ENCODE measurements at regions of chr2 and their contacts with region 1.

Region 1: GRCh38 chr2:181058378-181059269 is 78.2 kb downstream of the UBE2E3 start:
- DNase-seq: peak; percentile 62
- H3K4me3 ChIP-seq: no peak overlapping the region
- H3K27ac ChIP-seq: no peak overlapping the region
- H3K4me1 ChIP-seq: no peaks in the 10 kb centered on the region
- CTCF ChIP-seq: peak; percentile 100

Region 2: GRCh38 chr2:180125245-180125962 is 933.2 kb before region 1 on chr2:
- CTCF ChIA-PET with region 1: no interaction called
- POLR2A ChIA-PET with region 1: no interaction called
- intact Hi-C with region 1: loop called (anchors 1 kb)
- DNase-seq: peak; percentile 63
- H3K4me3 ChIP-seq: no peak overlapping the region
- H3K27ac ChIP-seq: no peak overlapping the region
- H3K4me1 ChIP-seq: no peaks in the 10 kb centered on the region
- CTCF ChIP-seq: peak; percentile 75

Region 3: DNA sequence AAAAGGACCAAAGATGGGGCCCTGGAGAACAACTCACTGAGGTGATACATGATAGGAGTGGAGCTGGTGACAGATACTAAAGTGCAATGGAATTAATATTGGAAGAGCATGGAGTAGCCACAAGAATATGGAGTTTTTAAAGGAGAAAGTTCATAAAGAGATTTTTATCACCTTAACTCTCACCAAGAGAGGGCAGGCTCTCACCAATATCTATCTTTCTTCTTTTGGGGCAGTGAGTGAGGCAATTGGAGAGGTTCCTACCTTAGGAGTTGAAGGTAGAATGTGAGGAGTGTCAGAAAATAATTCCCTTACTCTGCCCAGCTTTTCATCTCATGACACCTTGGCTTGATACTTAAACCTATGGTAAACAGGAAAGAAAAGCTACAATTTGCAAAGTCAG is 817.9 kb before region 1 on chr2:
- CTCF ChIA-PET with region 1: no interaction called
- POLR2A ChIA-PET with region 1: no interaction called
- intact Hi-C with region 1: loop called (anchors 10 kb)
- DNase-seq: peak; percentile 5
- H3K4me3 ChIP-seq: no peak overlapping the region
- H3K27ac ChIP-seq: no peak overlapping the region
- H3K4me1 ChIP-seq: no peaks in the 10 kb centered on the region
- CTCF ChIP-seq: peak; percentile 67

Region 4: GRCh38 chr2:180604077-180604476 is 454.5 kb before region 1 on chr2:
- CTCF ChIA-PET with region 1: no interaction called
- POLR2A ChIA-PET with region 1: no interaction called
- intact Hi-C with region 1: loop called (anchors 5 kb)
- DNase-seq: peak; percentile 1
- H3K4me3 ChIP-seq: no peak overlapping the region
- H3K27ac ChIP-seq: no peak overlapping the region
- H3K4me1 ChIP-seq: no peaks in the 10 kb centered on the region
- CTCF ChIP-seq: peak; percentile 65

Region 5: DNA sequence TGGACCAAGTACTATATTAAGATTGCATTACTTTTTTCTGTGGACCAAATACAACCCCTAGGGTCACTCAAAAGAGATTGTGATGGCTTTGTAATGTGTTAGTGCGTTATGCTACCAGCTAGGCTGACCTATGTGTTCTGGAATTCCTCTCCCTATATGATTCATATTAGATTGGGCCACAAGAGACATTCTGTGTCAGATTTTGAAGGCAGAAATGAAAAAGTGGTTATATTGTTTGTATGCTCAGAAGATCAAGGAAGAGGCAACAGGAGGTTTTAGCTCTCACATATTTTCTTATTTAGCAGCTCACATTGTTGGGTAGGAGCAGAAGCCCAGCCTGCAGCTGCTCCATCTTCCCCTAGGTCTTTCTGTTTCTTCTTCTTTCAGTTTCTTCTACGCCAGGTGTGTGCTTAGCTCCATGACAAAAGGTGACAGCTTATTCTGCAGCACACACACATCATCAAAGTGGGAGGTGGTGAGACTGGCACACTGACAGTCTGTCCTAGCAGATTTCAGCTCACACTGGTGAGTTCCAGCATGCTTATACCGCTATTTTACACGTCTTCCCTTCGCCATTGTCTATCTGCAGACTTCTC is 235.0 kb before region 1 on chr2:
- CTCF ChIA-PET with region 1: no interaction called
- POLR2A ChIA-PET with region 1: no interaction called
- intact Hi-C with region 1: loop called (anchors 10 kb)
- DNase-seq: no peak
- H3K4me3 ChIP-seq: no peak overlapping the region
- H3K27ac ChIP-seq: no peak overlapping the region
- H3K4me1 ChIP-seq: no peaks in the 10 kb centered on the region
- CTCF ChIP-seq: no peak

Region 6: DNA sequence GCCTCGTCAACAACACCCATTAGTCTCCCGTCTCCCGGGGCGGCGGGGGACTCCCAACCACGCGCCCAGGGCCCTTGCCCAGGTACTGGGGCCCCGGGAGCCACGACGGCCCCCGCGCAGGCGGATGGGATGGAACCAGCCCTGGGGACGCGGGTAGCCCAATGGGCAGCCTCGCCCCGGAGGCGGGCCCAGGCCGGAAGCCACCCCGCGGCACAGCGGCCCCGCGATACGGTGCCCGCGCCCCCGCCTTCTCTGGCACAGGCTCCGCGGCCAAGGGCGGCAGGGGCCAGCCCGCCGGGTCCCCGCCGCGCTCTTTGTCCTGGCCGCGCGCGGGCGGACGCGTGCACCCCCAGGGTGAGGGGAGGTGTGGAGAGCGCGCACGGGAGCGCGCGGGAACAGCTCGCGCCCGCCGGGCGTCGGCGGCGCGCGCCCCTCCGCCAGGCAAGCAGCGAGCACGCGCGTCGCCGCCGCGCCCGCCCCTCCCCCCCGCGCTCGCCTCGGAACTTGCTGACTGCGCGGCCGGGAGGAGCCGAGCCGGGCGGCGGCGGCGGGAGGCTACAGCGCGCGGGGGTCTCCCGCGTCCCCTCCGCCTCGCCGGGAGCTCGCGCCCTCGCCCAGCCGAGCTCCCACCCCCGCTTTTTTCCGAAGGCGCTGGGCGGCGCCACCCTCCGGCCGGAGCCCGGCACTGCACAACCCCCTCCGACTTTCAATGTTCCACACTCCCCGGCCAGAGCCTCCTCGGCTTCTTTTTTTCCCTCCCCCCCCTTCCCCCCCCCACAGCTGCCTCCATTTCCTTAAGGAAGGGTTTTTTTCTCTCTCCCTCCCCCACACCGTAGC is 78.3 kb before region 1 on chr2 and contains the start of gene UBE2E3:
- CTCF ChIA-PET with region 1: no interaction called
- POLR2A ChIA-PET with region 1: no interaction called
- intact Hi-C with region 1: loop called (anchors 2 kb)
- DNase-seq: peak; percentile 81
- H3K4me3 ChIP-seq: peak within 1 kb of the TSS; percentile 88
- H3K27ac ChIP-seq: no peak within 1 kb of the TSS
- H3K4me1 ChIP-seq: peaks cover 38% of the 10 kb centered on the region
- CTCF ChIP-seq: peak; percentile 73
- total RNA-seq, gene UBE2E3: 26.4 and 33.7 TPM in 2 replicates

Measured in OCI-LY7 (cell line).